Activated CD4-positive, alpha-beta T cell treated with anti-CD3 and anti-CD28 coated beads, Interleukin-2, amount 10 ng/mL, durations not matched to agents 24 days and 14 days (primary cell): ENCODE measurements at regions of chr2 and their contacts with region 1.

Region 1: DNA sequence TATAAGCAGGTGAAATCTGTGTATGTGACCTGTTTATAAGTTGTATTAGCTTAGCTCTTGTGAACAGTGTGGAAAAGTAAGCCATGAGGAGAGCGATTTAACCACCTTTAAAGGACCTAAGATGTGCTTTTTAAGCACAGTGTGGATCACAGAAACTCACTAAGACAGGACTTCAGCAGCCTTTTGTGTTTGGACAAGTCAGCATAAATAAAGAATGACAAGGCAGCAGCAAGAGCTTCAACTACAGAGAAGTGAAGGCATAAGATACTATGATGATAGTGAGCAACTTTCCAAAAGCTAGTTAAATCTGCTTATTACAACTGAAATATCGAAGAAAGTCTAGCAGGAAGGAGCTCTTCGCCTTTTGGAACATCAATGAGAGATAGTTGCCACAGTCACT is 8.9 kb downstream of the HNRNPA3 start:
- DNase-seq: no peak
- H3K4me3 Mint-ChIP-seq: no peak overlapping the region
- H3K27ac Mint-ChIP-seq: peak overlapping the region; percentile 3
- H3K4me1 Mint-ChIP-seq: peaks cover 31% of the 10 kb centered on the region
- H3K27me3 Mint-ChIP-seq: no peaks in the 10 kb centered on the region

Region 2: GRCh38 chr2:177239932-177240630 is 18.5 kb after region 1 on chr2:
- intact Hi-C with region 1: no loop called
- DNase-seq: peak; percentile 76
- H3K4me3 Mint-ChIP-seq: peak overlapping the region; percentile 63
- H3K27ac Mint-ChIP-seq: peak overlapping the region; percentile 85
- H3K4me1 Mint-ChIP-seq: peaks cover 57% of the 10 kb centered on the region
- H3K27me3 Mint-ChIP-seq: no peaks in the 10 kb centered on the region

Region 3: DNA sequence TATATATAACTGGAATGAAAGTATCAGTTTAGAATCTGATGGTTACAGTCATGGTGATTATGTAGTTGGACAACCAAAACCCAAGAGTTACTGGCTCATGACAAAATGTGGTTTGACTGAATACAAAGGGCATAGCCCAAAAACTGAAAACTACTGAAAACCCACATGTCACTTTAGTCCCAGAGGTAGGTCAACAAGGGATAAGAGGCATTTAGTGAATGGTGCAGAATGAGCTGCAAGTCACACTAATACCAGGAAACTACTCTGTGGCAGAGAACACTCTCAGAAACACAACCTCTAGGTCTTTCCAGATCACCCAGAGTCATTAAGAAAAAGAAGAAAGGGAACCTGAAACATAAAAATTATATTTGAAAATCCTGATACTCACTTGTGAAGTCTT is 325.6 kb after region 1 on chr2:
- intact Hi-C with region 1: loop called (anchors 5 kb)
- DNase-seq: peak; percentile 60
- H3K4me3 Mint-ChIP-seq: no peak overlapping the region
- H3K27ac Mint-ChIP-seq: peak overlapping the region; percentile 49
- H3K4me1 Mint-ChIP-seq: peaks cover 19% of the 10 kb centered on the region
- H3K27me3 Mint-ChIP-seq: no peaks in the 10 kb centered on the region